ENCODE measurements at regions of chr12 and their contacts with region 1.

Region 1: GRCh38 chr12:110012137-110012536 is 12.9 kb downstream of the ANKRD13A start:
- DNase-seq: no peak
- H3K4me3 ChIP-seq: no peak overlapping the region
- CTCF ChIP-seq: no peak

Region 2: DNA sequence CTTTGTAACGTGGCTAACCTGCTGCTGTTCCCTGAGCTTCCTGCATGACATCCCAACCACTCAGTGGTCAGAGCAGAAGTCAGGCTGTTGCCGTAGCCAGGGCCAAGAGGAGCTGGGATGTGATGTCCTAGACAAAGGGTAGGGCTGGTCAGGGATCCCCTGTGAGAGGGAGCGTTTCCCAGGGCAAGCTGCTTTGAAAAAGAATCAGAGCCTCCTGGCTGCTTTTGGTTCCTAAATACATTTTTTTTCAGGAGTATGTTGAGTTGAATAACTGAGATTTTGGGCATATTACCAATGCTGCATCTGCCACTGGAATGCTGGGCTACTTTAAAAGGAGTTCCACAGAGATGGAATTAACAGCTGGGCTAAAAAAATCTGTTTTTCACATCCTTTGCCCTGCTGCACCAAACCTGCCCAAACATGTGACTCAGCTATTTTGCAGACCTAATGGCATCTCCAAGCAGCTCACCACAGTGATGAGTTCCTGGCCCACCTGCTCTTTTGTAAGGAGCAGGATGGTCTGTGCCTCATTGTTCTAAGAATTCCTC is 11.0 kb after region 1 on chr12:
- CTCF ChIA-PET with region 1: interaction called, 15 read pairs
- POLR2A ChIA-PET with region 1: no interaction called
- DNase-seq: peak; percentile 40
- H3K4me3 ChIP-seq: no peak overlapping the region
- CTCF ChIP-seq: no peak

Measured in AG04449 (cell line).